IMR-90 (cell line): ENCODE measurements at regions of chr13 and their contacts with region 1.

Region 1: GRCh38 chr13:110103534-110103933 is 203.4 kb downstream of the COL4A1 start:
- DNase-seq: no peak
- ATAC-seq: no peak
- H3K4me3 ChIP-seq: no peak overlapping the region
- H3K27ac ChIP-seq: no peak overlapping the region
- H3K4me1 ChIP-seq: peaks cover 5% of the 10 kb centered on the region; the same call in 1 of the 2 replicates
- H3K27me3 ChIP-seq: no peaks in the 10 kb centered on the region
- CTCF ChIP-seq: no peak
- POLR2A ChIP-seq: no peak
- RAD21 ChIP-seq: no peak

Region 2: GRCh38 chr13:109874484-109875454 is 228.8 kb before region 1 on chr13:
- CTCF ChIA-PET with region 1: interaction called, 7 read pairs
- POLR2A ChIA-PET with region 1: no interaction called
- dilution Hi-C with region 1: no loop called
- in situ Hi-C with region 1: no loop called
- intact Hi-C with region 1: loop called (anchors 2 kb)
- DNase-seq: peak; percentile 48
- ATAC-seq: peak; percentile 79
- H3K4me3 ChIP-seq: no peak overlapping the region
- H3K27ac ChIP-seq: no peak overlapping the region
- H3K4me1 ChIP-seq: peaks cover 13% of the 10 kb centered on the region
- H3K27me3 ChIP-seq: no peaks in the 10 kb centered on the region
- CTCF ChIP-seq: no peak
- POLR2A ChIP-seq: no peak
- RAD21 ChIP-seq: no peak

Region 3: DNA sequence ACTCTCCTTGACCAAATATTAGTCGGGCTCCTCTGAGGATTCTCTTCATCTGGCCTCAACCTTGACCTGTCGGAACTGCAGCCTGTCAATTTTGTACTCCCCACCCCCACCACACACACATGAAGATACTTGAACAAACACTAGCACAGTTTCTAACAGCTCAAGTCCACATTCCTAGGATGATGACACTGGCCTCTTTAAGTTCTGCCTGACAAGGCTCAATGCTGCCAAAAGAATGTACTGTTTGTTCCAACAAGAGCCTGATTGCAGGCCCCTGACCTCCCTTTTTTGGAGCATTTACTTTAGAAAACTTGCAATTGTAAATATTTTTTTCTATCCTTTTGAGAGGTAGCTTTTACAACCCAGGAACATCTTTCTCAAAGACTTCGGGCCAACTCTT is 147.9 kb before region 1 on chr13:
- CTCF ChIA-PET with region 1: no interaction called
- POLR2A ChIA-PET with region 1: interaction called, 11 read pairs
- dilution Hi-C with region 1: no loop called
- in situ Hi-C with region 1: no loop called
- intact Hi-C with region 1: no loop called
- DNase-seq: peak; percentile 53
- ATAC-seq: peak; percentile 93
- H3K4me3 ChIP-seq: no peak overlapping the region
- H3K27ac ChIP-seq: peak overlapping the region; percentile 34; the same call in 1 of the 2 replicates
- H3K4me1 ChIP-seq: peaks cover 4% of the 10 kb centered on the region
- H3K27me3 ChIP-seq: no peaks in the 10 kb centered on the region
- CTCF ChIP-seq: no peak
- POLR2A ChIP-seq: no peak
- RAD21 ChIP-seq: no peak